A673 (cell line): ENCODE measurements at regions of chr18 and their contacts with region 1.

Region 1: DNA sequence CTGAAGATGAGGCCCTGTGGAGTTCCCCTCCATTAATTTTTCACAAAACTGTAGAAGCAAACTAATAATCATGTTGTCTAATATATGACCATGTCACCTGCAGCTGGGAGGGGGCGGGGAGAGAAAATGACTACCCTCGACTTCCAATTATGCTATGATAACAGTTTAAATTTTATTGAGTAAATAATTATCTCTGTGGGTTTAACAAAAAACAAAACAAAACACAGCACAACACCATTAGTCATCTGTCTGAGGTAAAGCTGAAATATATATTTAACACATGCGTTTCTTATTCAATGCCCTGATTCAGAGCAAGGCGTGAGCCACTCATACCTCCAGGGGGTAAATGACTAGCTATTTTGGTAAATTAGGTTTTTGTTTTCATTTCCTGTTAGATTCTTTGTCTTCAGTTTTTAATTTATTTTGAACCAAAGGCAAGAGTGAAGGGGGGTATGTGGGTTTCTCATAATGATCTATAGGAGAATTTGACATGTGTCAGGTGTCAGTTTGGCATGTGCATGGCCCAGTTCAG is 77.4 kb upstream of the ZCCHC2 start:
- DNase-seq: peak; percentile 81
- H3K4me3 ChIP-seq: no peak overlapping the region
- H3K27ac ChIP-seq: no peak overlapping the region
- H3K4me1 ChIP-seq: peaks cover 29% of the 10 kb centered on the region
- H3K27me3 ChIP-seq: no peaks in the 10 kb centered on the region
- CTCF ChIP-seq: no peak

Region 2: DNA sequence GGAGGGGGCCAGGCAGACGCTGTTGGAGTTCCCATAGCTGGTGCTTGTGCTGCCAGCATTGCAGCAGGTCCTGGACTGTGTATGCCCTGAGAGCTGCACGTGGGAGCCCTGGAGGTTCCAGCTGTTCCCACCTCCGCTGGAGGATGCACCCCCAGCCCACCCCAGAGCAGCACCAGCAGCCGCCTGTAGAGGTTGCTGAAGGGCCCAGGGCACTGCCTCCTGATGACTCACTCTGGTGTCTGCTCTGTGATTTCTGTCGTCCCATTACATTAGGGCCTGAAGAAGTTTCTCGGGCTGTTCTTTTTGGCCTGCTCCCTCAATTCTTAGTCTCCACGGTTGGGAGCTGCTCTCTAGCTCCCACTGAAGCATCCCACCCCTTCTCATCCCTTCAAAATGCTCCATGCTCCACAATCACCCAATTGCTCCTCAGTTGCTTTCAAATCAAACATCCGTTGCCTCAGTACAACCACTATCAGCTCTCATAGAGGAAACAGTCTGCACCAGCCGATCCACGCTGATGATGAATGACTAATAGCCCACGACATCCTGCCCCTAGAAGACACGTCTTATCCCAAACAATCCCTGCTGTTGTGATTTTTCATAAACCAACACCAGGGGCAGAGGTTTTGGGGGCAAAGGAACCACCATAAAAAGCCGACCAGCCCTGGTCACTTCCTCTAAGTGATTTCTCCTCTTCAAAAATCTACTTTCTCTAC is 487.5 kb before region 1 on chr18:
- CTCF ChIA-PET with region 1: no interaction called
- POLR2A ChIA-PET with region 1: no interaction called
- intact Hi-C with region 1: no loop called
- DNase-seq: no peak
- H3K4me3 ChIP-seq: no peak overlapping the region
- H3K27ac ChIP-seq: no peak overlapping the region
- H3K4me1 ChIP-seq: peaks cover 13% of the 10 kb centered on the region
- H3K27me3 ChIP-seq: no peaks in the 10 kb centered on the region
- CTCF ChIP-seq: no peak

Region 3: DNA sequence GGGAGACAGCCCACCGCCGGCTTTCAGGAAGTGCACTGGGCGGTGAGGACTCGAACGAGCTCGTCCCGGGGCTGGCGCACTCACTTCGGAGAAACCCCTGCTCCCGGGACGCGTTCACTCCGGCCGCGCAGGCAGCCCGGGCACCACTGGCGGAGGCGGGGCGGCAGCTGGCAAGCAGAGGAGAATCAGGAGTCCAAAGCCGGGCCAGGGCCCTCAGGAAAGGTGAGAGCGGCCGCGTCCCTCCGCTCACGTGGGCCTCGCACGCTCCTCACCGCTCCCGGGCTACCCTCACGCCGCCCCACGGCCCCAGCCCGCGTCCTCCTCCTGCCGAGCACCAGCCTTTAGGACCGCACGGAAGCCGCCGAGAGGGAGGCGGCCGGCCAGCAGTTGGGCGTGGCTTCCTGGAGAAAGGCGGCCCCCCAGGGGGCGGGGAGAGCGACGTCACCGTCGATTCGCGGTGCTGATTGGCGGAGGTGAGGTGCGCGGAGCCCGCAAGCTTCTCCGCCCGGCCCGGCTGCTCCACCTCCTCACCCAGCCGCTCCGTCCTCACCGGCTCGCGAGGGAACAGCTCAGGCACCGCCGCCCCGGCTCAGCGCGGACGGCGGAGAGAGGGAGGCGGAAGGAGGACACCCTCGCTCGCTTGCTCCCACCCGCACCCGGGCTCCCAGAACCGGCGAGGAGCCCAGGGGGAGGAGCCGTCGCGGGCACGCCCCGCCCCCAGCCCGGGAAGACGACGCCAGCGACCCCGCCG is 77.2 kb after region 1 on chr18 and contains the start of gene ZCCHC2:
- CTCF ChIA-PET with region 1: no interaction called
- POLR2A ChIA-PET with region 1: no interaction called
- intact Hi-C with region 1: loop called (anchors 5 kb)
- DNase-seq: peak; percentile 97
- H3K4me3 ChIP-seq: peak within 1 kb of the TSS; percentile 88
- H3K27ac ChIP-seq: peak within 1 kb of the TSS; percentile 77
- H3K4me1 ChIP-seq: peaks cover 17% of the 10 kb centered on the region
- H3K27me3 ChIP-seq: no peaks in the 10 kb centered on the region
- CTCF ChIP-seq: no peak
- total RNA-seq, gene ZCCHC2: 11.5 and 12.3 TPM in 2 replicates